PC-3 (cell line): ENCODE measurements at regions of chr12 and their contacts with region 1.

Region 1: GRCh38 chr12:12442548-12443071 is 85.7 kb downstream of the BORCS5 start:
- DNase-seq: peak; percentile 58
- ATAC-seq: peak; percentile 21; the same call in 1 of the 2 replicates
- H3K4me3 ChIP-seq: no peak overlapping the region
- H3K27ac ChIP-seq: peak overlapping the region; percentile 68
- H3K4me1 ChIP-seq: peaks cover 35% of the 10 kb centered on the region
- H3K27me3 ChIP-seq: no peaks in the 10 kb centered on the region
- CTCF ChIP-seq: no peak

Region 2: DNA sequence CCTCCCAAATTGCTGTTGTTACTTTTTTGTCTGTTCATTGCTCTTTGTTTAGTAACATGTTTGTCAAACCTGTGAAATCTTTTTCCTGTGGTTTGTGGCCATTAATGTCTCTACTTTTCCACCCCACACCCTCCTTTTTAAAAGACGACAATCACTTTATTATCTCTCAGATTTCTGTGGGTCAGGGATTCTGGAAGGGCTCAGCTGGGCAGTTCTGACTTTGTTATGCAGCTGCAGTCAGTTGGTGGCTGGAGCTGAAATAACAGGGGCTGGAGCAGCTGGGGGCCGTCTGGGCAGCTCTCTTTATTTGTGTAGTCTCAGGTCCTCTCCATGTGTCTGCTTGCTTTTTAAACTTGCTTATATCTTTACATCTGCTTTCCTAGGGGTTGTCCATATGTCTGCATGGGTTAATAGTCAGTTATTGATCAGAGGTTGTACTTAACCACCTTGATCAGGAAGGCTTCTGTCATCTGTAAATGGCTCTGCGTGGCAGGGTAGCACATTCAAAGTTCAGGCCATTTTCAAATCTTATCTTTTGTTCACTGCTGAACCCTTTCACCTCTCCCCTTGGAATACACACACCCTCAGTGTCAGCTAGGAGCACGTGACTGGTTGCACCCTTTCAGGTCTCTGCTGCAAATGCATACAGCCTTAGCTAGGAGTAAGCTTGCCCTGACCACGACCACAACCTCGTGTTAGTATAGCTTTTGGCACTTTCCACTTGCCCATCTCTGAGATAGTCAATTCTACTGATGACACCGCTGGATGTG is 57.9 kb before region 1 on chr12:
- CTCF ChIA-PET with region 1: no interaction called
- POLR2A ChIA-PET with region 1: no interaction called
- intact Hi-C with region 1: loop called (anchors 10 kb)
- DNase-seq: no peak
- ATAC-seq: no peak
- H3K4me3 ChIP-seq: no peak overlapping the region
- H3K27ac ChIP-seq: no peak overlapping the region
- H3K4me1 ChIP-seq: peaks cover 11% of the 10 kb centered on the region
- H3K27me3 ChIP-seq: no peaks in the 10 kb centered on the region
- CTCF ChIP-seq: no peak